Heart right ventricle (tissue), 16 donors: ENCODE measurements at regions of chr10 and their contacts with region 1.

Region 1: DNA sequence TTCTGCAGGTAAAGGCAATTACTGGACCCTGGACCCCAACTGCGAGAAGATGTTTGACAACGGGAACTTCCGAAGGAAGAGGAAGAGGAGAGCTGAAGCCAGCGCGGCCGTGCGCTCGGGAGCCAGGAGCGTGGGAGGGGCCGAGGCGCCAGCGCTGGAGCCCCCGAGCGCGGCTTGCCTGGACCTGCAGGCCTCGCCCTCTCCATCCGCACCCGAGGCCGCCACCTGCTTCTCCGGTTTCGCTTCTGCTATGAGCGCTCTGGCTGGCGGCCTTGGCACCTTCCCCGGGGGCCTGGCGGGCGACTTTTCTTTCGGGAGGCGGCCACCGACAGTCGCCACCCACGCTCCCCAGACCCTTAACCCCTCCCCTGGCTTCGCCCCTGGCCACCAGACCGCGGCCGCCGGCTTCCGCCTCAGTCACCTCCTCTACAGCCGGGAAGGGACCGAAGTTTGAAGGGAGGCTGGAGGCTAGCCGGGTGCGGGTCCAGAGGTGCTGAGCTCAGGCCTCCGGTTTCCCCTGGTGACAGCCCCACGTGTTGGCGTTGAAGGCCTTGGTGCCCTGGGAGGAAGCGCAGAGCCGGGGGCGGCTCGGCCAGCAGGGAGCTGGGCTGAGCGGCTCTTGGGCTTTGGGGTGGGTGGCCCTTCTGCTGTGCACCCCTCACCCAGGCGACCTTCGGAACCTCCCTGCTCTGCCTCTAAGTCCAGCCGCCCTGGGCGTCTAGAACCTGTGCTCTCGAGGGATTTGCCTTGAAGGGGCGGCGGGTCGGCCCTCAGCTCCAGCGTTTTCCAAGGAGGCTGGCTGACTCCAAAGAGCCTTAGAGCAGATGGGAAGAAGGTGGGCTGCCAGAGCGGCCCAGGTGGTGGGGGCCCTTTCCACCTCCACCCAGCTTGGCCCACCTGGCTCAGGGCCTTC is 1.8 kb downstream of the FOXI2 start:
- DNase-seq: no peak
- ATAC-seq: no peak
- H3K4me3 ChIP-seq: peak overlapping the region in 4 of 10 donors; percentile 4 to 56 (median 32)
- H3K27ac ChIP-seq: no peak overlapping the region
- H3K4me1 ChIP-seq: peaks cover 2 to 30% (median 11%) of the 10 kb centered on the region in 9 donors
- H3K27me3 ChIP-seq: peaks cover 22 to 70% (median 57%) of the 10 kb centered on the region in 7 donors
- CTCF ChIP-seq: no peak

Region 2: DNA sequence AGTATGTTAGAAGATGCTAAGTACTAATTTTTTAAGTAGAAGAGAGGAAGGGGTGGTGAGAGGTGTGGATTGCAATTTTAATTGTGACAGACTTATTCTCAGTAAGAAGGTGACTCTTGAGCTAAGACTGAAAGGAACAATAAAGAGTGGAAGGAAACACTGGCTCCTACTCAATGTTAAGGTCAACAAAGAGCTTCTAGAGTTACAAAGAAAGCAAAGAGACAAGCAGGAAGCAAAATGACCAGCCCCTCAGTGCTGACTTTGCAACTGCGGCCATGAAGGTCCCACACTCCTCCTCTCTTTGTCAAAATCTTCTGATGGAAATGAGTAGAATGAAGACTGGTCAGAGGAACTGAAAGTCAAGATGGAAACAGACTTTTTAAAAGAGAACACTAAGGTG is 81.7 kb before region 1 on chr10:
- intact Hi-C with region 1: no loop called
- DNase-seq: no peak
- ATAC-seq: no peak
- H3K4me3 ChIP-seq: no peak overlapping the region
- H3K27ac ChIP-seq: no peak overlapping the region
- H3K4me1 ChIP-seq: no peaks in the 10 kb centered on the region
- H3K27me3 ChIP-seq: no peaks in the 10 kb centered on the region
- CTCF ChIP-seq: no peak

Region 3: DNA sequence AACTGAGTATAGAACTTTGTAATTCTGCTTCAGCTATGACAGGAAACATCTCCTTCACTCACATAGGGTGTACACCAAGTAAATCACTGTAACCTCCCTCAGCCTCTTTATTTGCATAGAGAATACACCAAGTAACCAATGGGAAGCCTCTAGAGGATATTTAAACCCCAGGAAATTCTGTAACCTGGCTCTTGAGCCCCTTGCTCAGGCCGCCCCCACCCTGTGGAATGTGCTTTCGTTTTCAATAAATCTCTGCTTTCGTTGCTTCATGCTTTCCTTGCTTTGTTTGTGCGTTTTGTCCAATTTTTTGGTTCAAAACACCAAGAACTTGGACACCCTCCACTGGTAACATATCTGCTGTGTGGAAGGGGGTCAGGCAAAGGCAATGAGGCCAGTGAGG is 93.7 kb after region 1 on chr10:
- intact Hi-C with region 1: loop called in 1 of 10 experiments (anchors 10 kb)
- DNase-seq: no peak
- ATAC-seq: peak in 1 of 8 donors; percentile 38
- H3K4me3 ChIP-seq: no peak overlapping the region
- H3K27ac ChIP-seq: peak overlapping the region in 3 of 10 donors; percentile 0 to 72 (median 26)
- H3K4me1 ChIP-seq: peaks cover 0 to 26% (median 4%) of the 10 kb centered on the region in 9 donors
- H3K27me3 ChIP-seq: peaks cover 0 to 18% (median 6%) of the 10 kb centered on the region in 7 donors
- CTCF ChIP-seq: no peak

Region 4: GRCh38 chr10:127990846-127991542 is 252.2 kb after region 1 on chr10:
- intact Hi-C with region 1: no loop called
- DNase-seq: peak in 1 of 2 donors; percentile 44
- ATAC-seq: peak in 7 of 8 donors; percentile 20 to 67 (median 52)
- H3K4me3 ChIP-seq: no peak overlapping the region
- H3K27ac ChIP-seq: peak overlapping the region in 7 of 10 donors; percentile 42 to 88 (median 69)
- H3K4me1 ChIP-seq: peaks cover 16 to 69% (median 61%) of the 10 kb centered on the region in 9 donors
- H3K27me3 ChIP-seq: no peaks in the 10 kb centered on the region
- CTCF ChIP-seq: no peak